Lower leg skin (tissue), 4 donors: ENCODE measurements at regions of chr21 and their contacts with region 1.

Region 1: DNA sequence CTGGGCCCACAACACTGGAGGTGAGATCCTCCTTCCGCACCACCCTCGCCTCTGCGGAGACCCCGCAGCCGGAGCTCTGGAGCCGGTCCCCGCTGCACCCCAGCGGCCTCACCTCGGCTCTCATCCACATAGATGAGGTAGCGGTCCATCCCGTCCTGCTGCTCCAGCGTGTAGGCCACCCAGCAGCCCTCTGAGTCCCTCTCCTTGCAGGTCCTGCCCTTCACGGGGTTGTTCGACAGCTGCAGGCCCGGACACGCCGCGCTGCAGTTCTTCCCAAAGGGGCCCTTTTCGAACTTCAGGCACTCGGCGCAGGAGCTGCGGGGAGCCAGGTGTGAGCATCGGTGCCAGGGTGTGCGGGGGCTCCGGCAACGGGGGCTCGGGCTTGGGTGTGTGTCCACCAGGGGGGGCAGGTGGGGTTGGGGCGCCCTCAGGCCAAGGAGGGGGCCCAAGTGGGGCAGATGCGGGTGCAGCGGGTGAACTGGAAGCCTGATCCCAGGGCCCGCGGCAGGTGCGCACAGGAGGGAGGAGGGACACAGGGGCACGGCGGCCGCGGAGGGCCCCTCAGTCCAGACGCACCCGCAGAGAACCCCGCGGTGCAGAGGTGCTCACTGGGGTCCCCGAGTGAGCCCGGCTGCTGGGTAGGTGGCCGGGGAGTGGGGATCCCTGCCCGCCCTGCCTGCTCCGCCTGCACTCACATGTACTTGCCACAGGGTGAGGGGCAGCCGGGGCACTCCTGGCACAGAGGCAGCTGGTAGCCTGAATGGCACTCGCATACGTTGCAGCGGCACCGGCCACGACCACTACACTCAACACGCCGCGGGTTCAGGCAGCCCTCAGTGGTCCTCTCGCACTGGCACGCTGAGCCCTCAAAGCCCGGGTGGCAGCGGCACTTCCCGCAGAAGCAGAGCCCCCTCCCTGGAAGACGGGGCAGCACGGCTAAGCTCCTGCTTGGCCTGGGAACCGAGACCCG is 15.4 kb upstream of the PTTG1IP start:
- DNase-seq: no peak
- H3K4me3 ChIP-seq: no peak overlapping the region
- CTCF ChIP-seq: no peak
- POLR2A ChIP-seq: no peak

Region 2: DNA sequence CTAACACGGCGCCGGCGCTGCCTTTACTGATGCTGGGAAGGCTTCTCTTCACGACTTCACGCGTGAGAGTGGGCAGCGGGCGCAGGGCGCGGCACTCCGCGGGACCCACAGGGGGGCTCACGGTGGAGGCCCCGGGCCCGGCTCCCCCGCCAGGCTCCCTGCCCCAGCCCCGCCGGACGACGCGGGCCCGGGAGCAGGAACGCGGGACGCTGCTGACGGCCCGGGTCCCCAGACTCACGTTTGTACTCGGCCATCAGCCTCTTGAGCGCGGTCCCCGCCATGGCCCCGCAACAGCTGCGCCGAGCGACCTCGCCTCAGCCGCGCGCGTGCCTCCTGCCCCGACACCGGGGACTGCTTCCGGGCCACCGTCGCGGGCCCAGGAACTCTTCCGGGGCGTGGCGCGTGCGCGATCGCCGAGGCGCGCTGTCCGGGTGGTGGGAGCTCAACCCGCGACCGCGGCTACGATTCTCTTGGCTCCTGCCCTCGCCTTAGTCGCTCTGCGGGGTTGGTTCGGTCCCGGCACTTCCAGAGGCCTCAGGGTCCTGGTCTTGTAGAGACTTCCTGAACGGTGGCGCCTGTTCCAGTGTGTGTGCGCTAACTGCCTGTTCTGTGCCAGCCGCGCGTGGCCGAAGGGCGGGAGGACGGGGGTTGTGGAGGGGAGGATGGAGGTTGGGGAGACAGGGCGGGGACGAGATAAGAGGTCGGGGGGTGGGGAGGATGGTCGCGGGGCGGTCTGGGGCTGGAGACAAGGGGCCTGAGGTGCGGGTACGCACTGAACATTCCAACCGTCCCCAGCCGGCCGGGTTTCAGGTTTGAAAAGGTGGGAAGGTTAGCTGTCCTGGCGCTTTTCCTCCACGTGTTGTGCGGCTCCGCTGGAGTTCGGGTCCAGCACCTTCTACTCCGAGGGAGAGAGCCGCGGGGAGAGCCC is 87.1 kb before region 1 on chr21 and contains the start of gene UBE2G2:
- intact Hi-C with region 1: no loop called
- DNase-seq: peak; percentile 64 to 96
- H3K4me3 ChIP-seq: peak within 1 kb of the TSS; percentile 76
- CTCF ChIP-seq: no peak
- POLR2A ChIP-seq: no peak
- total RNA-seq, gene UBE2G2: 37.2 to 61.8 (median 49.8) TPM

Region 3: DNA sequence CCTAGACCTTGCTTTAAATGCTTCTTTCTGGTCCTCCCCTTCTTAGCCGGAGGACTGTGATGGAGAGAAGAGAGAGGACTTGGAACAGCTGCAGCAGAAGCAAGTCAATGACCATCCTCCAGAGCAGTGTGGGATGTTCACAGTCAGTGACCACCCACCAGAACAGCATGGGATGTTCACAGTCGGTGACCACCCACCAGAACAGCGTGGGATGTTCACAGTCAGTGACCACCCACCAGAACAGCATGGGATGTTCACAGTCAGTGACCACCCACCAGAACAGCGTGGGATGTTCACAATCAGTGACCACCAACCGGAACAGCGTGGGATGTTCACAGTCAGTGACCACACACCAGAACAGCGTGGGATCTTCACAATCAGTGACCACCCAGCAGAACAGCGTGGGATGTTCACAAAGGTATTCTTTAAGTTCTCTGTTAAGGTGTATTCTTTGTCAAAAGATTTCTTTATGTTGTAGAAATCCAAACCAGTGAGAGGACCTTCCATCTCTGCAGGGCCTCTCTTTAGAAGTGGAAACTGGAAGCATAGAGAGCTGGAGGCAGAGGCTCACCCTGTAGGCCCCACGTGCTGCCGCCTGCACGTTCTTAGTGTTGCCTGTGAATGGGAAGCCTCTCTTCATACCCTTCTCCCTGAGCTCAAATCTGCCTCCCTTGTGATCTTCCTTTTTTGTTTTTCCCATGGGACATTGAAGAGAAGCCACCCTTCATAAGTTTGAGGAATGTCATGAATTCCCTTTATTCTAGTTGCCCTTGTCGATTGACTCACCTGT is 1445.7 kb after region 1 on chr21:
- intact Hi-C with region 1: loop called (anchors 5 kb)
- DNase-seq: no peak
- H3K4me3 ChIP-seq: no peak overlapping the region
- CTCF ChIP-seq: no peak
- POLR2A ChIP-seq: no peak